CD4-positive, alpha-beta memory T cell (primary cell): ENCODE measurements at regions of chr19 and their contacts with region 1.

Region 1: GRCh38 chr19:52601025-52601973 is 31.2 kb downstream of the ZNF701 start:
- DNase-seq: peak; percentile 90 to 92 (median 90)
- H3K4me3 ChIP-seq: peak overlapping the region; percentile 57 to 63
- H3K4me3 Mint-ChIP-seq: peak overlapping the region; percentile 93 to 97 (median 94)
- H3K27ac ChIP-seq: peak overlapping the region; percentile 66
- H3K27ac Mint-ChIP-seq: peak overlapping the region; percentile 65 to 96 (median 93)
- H3K4me1 ChIP-seq: peaks cover 15% of the 10 kb centered on the region
- H3K4me1 Mint-ChIP-seq: peaks cover 16 to 40% (median 27%) of the 10 kb centered on the region in 4 donors
- H3K27me3 ChIP-seq: no peaks in the 10 kb centered on the region
- H3K27me3 Mint-ChIP-seq: no peaks in the 10 kb centered on the region

Region 2: GRCh38 chr19:52343548-52343947 is 257.8 kb before region 1 on chr19:
- CTCF ChIA-PET with region 1: no interaction called
- POLR2A ChIA-PET with region 1: no interaction called
- intact Hi-C with region 1: loop called (anchors 2 kb)
- DNase-seq: peak; percentile 42 to 55 (median 44)
- H3K4me3 ChIP-seq: no peak overlapping the region
- H3K4me3 Mint-ChIP-seq: no peak overlapping the region
- H3K27ac ChIP-seq: no peak overlapping the region
- H3K27ac Mint-ChIP-seq: peak overlapping the region in 3 of 7 donors; percentile 1 to 27 (median 23)
- H3K4me1 ChIP-seq: no peaks in the 10 kb centered on the region
- H3K4me1 Mint-ChIP-seq: peaks cover 0 to 5% (median 3%) of the 10 kb centered on the region in 4 donors
- H3K27me3 ChIP-seq: no peaks in the 10 kb centered on the region
- H3K27me3 Mint-ChIP-seq: no peaks in the 10 kb centered on the region

Region 3: GRCh38 chr19:52748336-52748950 is 147.1 kb after region 1 on chr19:
- CTCF ChIA-PET with region 1: no interaction called
- POLR2A ChIA-PET with region 1: no interaction called
- intact Hi-C with region 1: no loop called
- DNase-seq: peak in 4 of 5 donors; percentile 30 to 41 (median 35)
- H3K4me3 ChIP-seq: no peak overlapping the region
- H3K4me3 Mint-ChIP-seq: no peak overlapping the region
- H3K27ac ChIP-seq: no peak overlapping the region
- H3K27ac Mint-ChIP-seq: no peak overlapping the region
- H3K4me1 ChIP-seq: no peaks in the 10 kb centered on the region
- H3K4me1 Mint-ChIP-seq: peaks cover 2 to 20% (median 7%) of the 10 kb centered on the region in 4 donors
- H3K27me3 ChIP-seq: no peaks in the 10 kb centered on the region
- H3K27me3 Mint-ChIP-seq: no peaks in the 10 kb centered on the region